Activated CD4-positive, alpha-beta T cell treated with anti-CD3 and anti-CD28 coated beads, Interleukin-2, amount 10 ng/mL, durations not matched to agents 24 days and 14 days (primary cell): ENCODE measurements at regions of chr5 and their contacts with region 1.

Region 1: DNA sequence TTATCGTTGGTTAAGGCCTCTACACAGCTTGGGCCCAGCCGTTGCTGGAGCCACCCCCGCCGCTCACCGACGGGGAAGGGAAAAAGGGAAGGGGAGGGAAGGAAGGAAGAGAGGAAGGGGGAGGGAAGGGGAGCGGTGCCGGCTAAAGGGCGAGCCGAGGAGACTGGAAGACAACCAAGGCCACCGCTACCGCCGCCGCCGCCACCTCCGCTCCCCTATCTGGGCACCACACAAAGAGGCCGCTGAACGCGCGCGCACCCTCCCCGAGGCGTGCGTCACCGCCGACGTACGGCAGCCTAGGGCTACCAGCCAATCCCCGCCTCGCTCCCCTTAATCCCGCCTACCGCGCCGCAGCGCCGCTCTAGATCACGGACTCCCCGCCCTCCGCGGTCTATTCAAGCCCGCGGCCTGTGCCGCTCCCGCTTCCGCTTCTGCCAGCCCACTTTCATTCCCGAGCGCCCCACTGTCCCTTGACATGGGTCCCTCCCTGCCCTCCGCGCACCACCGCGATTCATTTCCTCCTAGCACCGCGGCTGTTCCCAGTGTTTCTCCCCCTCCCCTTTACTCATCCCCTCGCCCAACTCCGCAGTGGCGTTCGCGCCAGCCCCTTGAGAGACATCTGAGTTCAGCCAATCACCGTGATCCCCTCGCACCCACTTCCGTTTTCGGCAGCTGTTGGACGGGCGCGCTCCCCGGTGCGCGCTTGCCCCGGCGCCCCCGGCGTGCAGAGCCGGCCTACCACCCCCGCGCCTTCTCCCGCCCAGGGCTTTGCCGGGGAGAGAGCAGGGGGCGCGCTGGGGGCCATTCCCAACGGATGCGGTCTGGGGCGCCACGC is at the start of gene HNRNPA0:
- DNase-seq: peak; percentile 99
- H3K4me3 Mint-ChIP-seq: peak within 1 kb of the TSS; percentile 93
- H3K27ac Mint-ChIP-seq: peak within 1 kb of the TSS; percentile 100
- H3K4me1 Mint-ChIP-seq: peaks cover 26% of the 10 kb centered on the region
- H3K27me3 Mint-ChIP-seq: peaks cover 9% of the 10 kb centered on the region
- total RNA-seq, gene HNRNPA0: 38.3 and 38.6 TPM in 2 replicates

Region 2: GRCh38 chr5:137695651-137696428 is 58.5 kb before region 1 on chr5:
- intact Hi-C with region 1: loop called (anchors 1 kb)
- DNase-seq: peak; percentile 77
- H3K4me3 Mint-ChIP-seq: peak overlapping the region; percentile 75
- H3K27ac Mint-ChIP-seq: peak overlapping the region; percentile 88
- H3K4me1 Mint-ChIP-seq: peaks cover 38% of the 10 kb centered on the region
- H3K27me3 Mint-ChIP-seq: no peaks in the 10 kb centered on the region

Region 3: GRCh38 chr5:137743031-137743640 is 11.2 kb before region 1 on chr5:
- intact Hi-C with region 1: loop called (anchors 1 kb)
- DNase-seq: peak; percentile 89
- H3K4me3 Mint-ChIP-seq: no peak overlapping the region
- H3K27ac Mint-ChIP-seq: no peak overlapping the region
- H3K4me1 Mint-ChIP-seq: peaks cover 6% of the 10 kb centered on the region
- H3K27me3 Mint-ChIP-seq: peaks cover 4% of the 10 kb centered on the region

Region 4: DNA sequence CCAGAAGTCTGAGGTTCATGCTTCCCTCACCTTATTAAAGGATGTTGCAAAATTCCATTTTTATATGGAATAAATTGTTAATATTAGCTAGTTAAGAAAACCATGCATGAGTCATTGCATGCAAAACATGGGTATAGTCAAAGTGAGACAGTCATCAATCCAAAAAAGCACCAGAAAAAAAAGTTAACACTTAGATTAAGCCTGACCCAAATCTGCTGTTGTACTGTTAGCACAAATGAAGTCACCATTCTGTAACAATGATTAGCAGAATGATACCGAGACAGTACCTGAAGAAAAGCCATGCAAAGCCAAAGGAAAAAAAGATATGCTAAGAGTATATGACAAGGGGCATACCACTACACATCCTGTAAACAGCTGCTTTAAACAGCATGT is 184.4 kb after region 1 on chr5:
- intact Hi-C with region 1: loop called (anchors 1 kb)
- DNase-seq: no peak
- H3K4me3 Mint-ChIP-seq: no peak overlapping the region
- H3K27ac Mint-ChIP-seq: peak overlapping the region; percentile 43
- H3K4me1 Mint-ChIP-seq: peaks cover 4% of the 10 kb centered on the region
- H3K27me3 Mint-ChIP-seq: no peaks in the 10 kb centered on the region

Region 5: DNA sequence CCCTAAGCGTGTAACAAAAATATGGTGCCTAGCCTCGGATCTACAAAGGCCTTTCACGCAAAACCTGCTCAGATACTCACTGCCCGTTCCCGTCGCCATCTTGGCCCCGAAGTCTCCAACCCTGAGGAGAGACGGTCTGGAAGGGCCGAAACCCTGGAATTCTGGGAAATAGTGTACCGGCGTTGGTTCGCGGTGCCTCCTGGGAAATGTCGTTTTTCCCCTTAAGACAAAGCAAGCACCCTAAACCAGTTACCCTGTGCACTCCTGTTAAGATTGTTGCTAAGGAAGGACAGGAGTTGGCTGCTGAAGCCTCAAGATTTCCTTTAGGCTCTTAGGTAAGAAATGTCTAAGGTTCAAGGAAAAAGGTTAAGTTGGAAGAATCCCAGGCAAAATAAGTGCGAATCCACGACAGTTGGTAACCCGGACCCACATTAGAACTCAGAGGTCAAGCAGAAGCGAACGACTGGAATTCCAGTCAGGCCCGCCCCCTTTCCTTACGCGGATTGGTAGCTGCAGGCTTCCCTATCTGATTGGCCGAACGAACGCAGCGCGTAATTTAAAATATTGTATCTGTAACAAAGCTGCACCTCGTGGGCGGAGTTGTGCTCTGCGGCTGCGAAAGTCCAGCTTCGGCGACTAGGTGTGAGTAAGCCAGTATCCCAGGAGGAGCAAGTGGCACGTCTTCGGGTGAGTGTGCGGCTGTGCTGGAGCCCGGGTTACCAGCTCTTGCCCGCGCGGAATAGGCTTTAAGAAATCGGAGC is 424.4 kb after region 1 on chr5 and contains the starts of genes BRD8 and KIF20A:
- intact Hi-C with region 1: loop called (anchors 1 kb)
- DNase-seq: peak; percentile 97
- H3K4me3 Mint-ChIP-seq: no peak within 1 kb of the TSS
- H3K27ac Mint-ChIP-seq: no peak within 1 kb of the TSS
- H3K4me1 Mint-ChIP-seq: peaks cover 20% of the 10 kb centered on the region
- H3K27me3 Mint-ChIP-seq: no peaks in the 10 kb centered on the region
- total RNA-seq, gene BRD8: 53.6 and 61.1 TPM in 2 replicates
- total RNA-seq, gene KIF20A: 18.0 and 19.7 TPM in 2 replicates

Region 6: DNA sequence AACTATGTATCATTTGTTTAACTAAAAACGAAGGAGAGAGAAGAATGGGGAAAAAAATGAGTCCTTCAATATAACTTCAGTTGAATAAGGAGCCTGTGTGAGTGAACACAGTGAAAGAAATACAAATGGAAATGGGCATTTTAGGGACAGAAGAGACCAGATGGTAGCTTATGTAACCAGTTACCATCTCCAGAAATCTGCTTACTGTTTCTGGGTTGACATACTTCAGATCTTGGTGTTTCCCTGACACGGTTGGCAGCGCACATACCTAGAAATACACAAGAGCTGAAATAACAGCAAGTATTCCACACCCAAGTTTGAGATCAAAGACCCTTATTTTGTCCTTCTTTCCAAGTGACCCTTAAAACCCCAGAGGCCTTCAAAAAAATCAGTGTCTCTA is 535.0 kb after region 1 on chr5:
- intact Hi-C with region 1: no loop called
- DNase-seq: no peak
- H3K4me3 Mint-ChIP-seq: no peak overlapping the region
- H3K27ac Mint-ChIP-seq: no peak overlapping the region
- H3K4me1 Mint-ChIP-seq: no peaks in the 10 kb centered on the region
- H3K27me3 Mint-ChIP-seq: no peaks in the 10 kb centered on the region

Region 7: GRCh38 chr5:138464008-138464387 is 709.7 kb after region 1 on chr5:
- intact Hi-C with region 1: loop called (anchors 10 kb)
- DNase-seq: peak; percentile 98
- H3K4me3 Mint-ChIP-seq: peak overlapping the region; percentile 90
- H3K27ac Mint-ChIP-seq: peak overlapping the region; percentile 93
- H3K4me1 Mint-ChIP-seq: peaks cover 47% of the 10 kb centered on the region
- H3K27me3 Mint-ChIP-seq: peaks cover 6% of the 10 kb centered on the region